CD8-positive, alpha-beta T cell (primary cell): ENCODE measurements at regions of chr19 and their contacts with region 1.

Region 1: DNA sequence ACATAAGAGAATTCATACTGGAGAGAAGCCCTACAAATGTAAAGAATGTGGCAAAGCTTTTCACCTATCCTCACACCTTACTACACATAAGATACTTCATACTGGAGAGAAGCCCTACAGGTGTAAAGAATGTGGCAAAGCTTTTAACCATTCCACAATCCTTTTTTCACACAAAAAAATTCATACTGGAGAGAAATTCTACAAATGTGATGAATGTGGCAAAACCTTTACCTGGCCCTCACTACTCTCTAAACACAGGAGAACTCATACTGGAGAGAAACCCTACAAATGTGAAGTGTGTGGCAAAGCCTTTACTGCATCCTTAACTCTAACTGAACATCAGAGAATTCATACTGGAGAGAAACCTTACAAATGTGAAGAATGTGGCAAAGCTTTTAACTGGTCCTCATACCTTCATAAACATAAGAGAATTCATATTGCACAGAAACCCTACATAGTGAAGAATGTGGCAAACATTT is 14.0 kb upstream of the ZNF506 start:
- DNase-seq: no peak
- ATAC-seq: no peak
- H3K4me3 ChIP-seq: no peak overlapping the region
- H3K4me3 Mint-ChIP-seq: no peak overlapping the region
- H3K27ac ChIP-seq: no peak overlapping the region
- H3K27ac Mint-ChIP-seq: no peak overlapping the region
- H3K4me1 ChIP-seq: no peaks in the 10 kb centered on the region
- H3K4me1 Mint-ChIP-seq: no peaks in the 10 kb centered on the region
- H3K27me3 ChIP-seq: no peaks in the 10 kb centered on the region
- H3K27me3 Mint-ChIP-seq: no peaks in the 10 kb centered on the region
- CTCF ChIP-seq: no peak

Region 2: DNA sequence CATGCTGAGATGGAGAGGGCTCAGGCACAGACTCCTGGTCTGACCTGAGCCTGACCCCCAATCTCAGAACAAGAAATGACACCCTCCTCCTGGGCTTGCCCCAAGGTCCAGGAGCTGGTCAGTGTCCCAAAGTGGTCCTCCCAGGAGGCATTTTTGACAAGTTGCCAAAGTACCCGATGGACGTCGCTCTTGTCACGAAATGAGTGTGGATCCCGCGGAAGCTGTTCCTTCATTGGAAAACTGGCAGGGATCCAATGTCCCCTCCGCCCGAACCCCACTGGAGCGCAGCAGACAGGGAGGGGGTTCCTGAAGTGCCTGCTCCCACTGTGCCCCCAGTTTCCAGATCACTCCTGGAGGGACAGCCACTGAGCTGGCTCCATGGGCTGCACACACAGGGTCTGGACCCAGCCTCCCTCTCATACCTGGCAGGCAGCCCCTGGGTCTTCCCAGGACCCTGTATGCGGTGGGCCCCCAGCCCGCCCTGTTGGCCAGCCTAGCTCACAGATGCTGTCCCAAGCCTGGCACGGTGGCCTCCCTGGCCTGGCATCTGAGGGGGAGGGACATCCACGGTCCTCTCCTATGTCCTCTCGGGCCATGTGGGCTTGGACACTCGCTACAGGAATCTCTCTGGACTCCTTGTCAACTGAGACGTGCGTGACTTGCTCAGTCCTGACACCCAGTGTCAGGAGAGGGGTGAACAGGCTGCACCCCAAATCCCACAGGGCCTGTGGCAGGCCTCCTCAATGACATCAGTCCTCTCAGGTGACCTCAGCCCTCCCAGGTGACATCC is 89.9 kb before region 1 on chr19:
- CTCF ChIA-PET with region 1: no interaction called
- POLR2A ChIA-PET with region 1: no interaction called
- intact Hi-C with region 1: no loop called
- DNase-seq: peak in 2 of 9 experiments; percentile 21 to 29
- ATAC-seq: peak; percentile 52
- H3K4me3 ChIP-seq: no peak overlapping the region
- H3K4me3 Mint-ChIP-seq: no peak overlapping the region
- H3K27ac ChIP-seq: no peak overlapping the region
- H3K27ac Mint-ChIP-seq: no peak overlapping the region
- H3K4me1 ChIP-seq: no peaks in the 10 kb centered on the region
- H3K4me1 Mint-ChIP-seq: no peaks in the 10 kb centered on the region
- H3K27me3 ChIP-seq: no peaks in the 10 kb centered on the region
- H3K27me3 Mint-ChIP-seq: no peaks in the 10 kb centered on the region
- CTCF ChIP-seq: no peak

Region 3: GRCh38 chr19:19937403-19937802 is 101.8 kb after region 1 on chr19:
- CTCF ChIA-PET with region 1: no interaction called
- POLR2A ChIA-PET with region 1: no interaction called
- intact Hi-C with region 1: loop called in 1 of 2 experiments (anchors 1 kb)
- DNase-seq: no peak
- ATAC-seq: no peak
- H3K4me3 ChIP-seq: no peak overlapping the region
- H3K4me3 Mint-ChIP-seq: no peak overlapping the region
- H3K27ac ChIP-seq: no peak overlapping the region
- H3K27ac Mint-ChIP-seq: no peak overlapping the region
- H3K4me1 ChIP-seq: no peaks in the 10 kb centered on the region
- H3K4me1 Mint-ChIP-seq: no peaks in the 10 kb centered on the region
- H3K27me3 ChIP-seq: no peaks in the 10 kb centered on the region
- H3K27me3 Mint-ChIP-seq: no peaks in the 10 kb centered on the region
- CTCF ChIP-seq: no peak

Region 4: GRCh38 chr19:19956434-19957075 is 121.0 kb after region 1 on chr19:
- CTCF ChIA-PET with region 1: no interaction called
- POLR2A ChIA-PET with region 1: no interaction called
- intact Hi-C with region 1: no loop called
- DNase-seq: no peak
- ATAC-seq: no peak
- H3K4me3 ChIP-seq: no peak overlapping the region
- H3K4me3 Mint-ChIP-seq: no peak overlapping the region
- H3K27ac ChIP-seq: no peak overlapping the region
- H3K27ac Mint-ChIP-seq: no peak overlapping the region
- H3K4me1 ChIP-seq: no peaks in the 10 kb centered on the region
- H3K4me1 Mint-ChIP-seq: peaks cover 3% of the 10 kb centered on the region
- H3K27me3 ChIP-seq: no peaks in the 10 kb centered on the region
- H3K27me3 Mint-ChIP-seq: no peaks in the 10 kb centered on the region
- CTCF ChIP-seq: no peak